GM10248 (cell line): ENCODE measurements at regions of chr4 and their contacts with region 1.

Region 1: DNA sequence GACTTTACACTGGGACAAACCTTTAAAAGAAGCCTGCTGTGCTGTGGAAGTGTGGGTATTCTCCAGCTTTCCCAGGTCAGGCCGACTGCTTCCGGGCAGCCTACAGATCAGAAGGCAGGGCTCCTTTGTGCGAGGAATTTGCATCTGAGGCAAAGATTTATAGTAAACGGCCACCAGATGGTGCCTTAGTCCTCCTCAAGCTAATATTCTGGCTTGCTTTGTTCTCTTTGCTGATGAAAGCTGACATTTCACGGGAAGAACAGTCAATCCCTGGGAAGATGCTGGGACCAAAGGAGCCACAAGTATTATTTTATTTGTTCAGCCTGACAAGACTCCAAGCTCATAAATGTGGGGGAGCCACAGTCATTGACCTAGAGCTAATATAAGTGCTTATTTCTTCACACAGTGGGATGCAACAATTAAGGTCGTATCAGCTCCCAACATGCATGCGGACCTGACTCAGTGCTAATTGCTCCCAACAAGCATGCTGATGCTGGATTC is 120.7 kb upstream of the TRIM2 start:
- DNase-seq: peak; percentile 72
- CTCF ChIP-seq: peak; percentile 55

Region 2: DNA sequence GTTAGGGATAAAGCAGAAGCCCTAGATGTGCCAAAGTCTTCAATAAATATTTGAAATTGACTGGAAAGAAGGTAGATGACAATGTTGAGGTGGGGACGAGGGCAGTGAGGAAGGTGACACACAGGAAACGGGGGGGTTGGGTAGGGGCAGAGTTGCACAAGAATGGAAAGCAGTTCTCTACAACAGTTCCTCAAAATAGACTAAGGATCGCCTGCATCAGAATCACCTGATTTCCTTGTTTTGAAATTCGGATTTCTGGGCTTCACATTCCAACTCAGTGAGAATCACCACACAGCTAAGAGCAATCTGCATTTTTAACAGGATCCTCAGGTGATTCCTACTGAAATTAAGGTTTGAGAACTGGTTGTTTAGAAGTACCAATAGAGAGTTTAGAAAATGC is 233.1 kb before region 1 on chr4:
- CTCF ChIA-PET with region 1: interaction called, 76 read pairs
- POLR2A ChIA-PET with region 1: no interaction called
- DNase-seq: no peak
- CTCF ChIP-seq: no peak

Region 3: GRCh38 chr4:153095448-153096204 is 12.1 kb after region 1 on chr4:
- CTCF ChIA-PET with region 1: interaction called, 24 read pairs
- POLR2A ChIA-PET with region 1: no interaction called
- DNase-seq: no peak
- CTCF ChIP-seq: no peak

Region 4: GRCh38 chr4:153107246-153107645 is 23.7 kb after region 1 on chr4:
- CTCF ChIA-PET with region 1: interaction called, 19 read pairs
- POLR2A ChIA-PET with region 1: no interaction called
- DNase-seq: no peak
- CTCF ChIP-seq: no peak

Region 5: GRCh38 chr4:153115322-153116290 is 32.1 kb after region 1 on chr4:
- CTCF ChIA-PET with region 1: interaction called, 11 read pairs
- POLR2A ChIA-PET with region 1: no interaction called
- DNase-seq: no peak
- CTCF ChIP-seq: no peak

Region 6: GRCh38 chr4:153643406-153644383 is 560.2 kb after region 1 on chr4:
- CTCF ChIA-PET with region 1: interaction called, 10 read pairs
- POLR2A ChIA-PET with region 1: no interaction called
- DNase-seq: peak; percentile 74
- CTCF ChIP-seq: peak; percentile 53